ENCODE measurements at regions of chr11 and their contacts with region 1.

Region 1: DNA sequence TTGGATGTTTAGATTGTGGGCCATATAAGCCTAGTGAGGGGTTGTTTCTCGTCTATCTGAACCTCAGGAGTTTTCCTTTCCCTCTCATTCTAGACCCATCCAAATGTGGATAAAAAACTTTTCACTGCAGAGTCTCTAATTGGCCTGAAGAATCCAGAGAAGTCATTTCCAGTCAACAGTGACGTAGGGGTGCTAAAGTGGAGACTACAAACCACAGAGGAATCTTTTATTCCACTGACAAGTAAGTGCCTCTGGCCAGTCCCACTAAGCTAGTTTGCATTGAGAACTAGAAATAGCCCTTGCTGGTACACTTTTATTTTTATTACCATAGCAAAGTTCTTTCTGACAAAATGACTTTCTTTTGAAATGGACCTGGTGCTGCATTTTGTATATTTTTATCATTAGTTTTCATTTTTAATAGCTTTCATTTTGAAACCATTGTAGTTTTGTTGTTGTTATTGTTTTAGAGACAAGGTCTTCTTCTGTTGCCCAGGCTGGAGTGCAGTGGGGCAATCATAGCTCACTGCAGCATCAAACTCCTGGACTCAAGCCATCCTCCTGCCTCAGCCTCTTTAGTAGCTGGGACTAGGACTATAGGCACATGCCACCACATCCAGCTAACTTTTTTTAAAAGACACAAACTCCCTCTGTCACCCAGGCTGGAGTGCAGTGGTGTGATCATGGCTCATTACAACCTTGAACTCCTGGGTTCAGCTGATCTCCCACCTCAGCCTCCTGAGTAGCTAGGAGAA is 14.6 kb upstream of the PHLDB1 start:
- DNase-seq: no peak
- H3K4me3 ChIP-seq: no peak overlapping the region
- H3K27ac ChIP-seq: no peak overlapping the region
- H3K4me1 ChIP-seq: no peaks in the 10 kb centered on the region
- H3K27me3 ChIP-seq: no peaks in the 10 kb centered on the region
- CTCF ChIP-seq: no peak
- POLR2A ChIP-seq: no peak

Region 2: GRCh38 chr11:118565051-118565450 is 27.7 kb before region 1 on chr11:
- CTCF ChIA-PET with region 1: no interaction called
- POLR2A ChIA-PET with region 1: no interaction called
- dilution Hi-C with region 1: no loop called
- intact Hi-C with region 1: no loop called
- DNase-seq: no peak
- H3K4me3 ChIP-seq: no peak overlapping the region
- H3K27ac ChIP-seq: no peak overlapping the region
- H3K4me1 ChIP-seq: peaks cover 5% of the 10 kb centered on the region
- H3K27me3 ChIP-seq: no peaks in the 10 kb centered on the region
- CTCF ChIP-seq: no peak
- POLR2A ChIP-seq: no peak

Region 3: DNA sequence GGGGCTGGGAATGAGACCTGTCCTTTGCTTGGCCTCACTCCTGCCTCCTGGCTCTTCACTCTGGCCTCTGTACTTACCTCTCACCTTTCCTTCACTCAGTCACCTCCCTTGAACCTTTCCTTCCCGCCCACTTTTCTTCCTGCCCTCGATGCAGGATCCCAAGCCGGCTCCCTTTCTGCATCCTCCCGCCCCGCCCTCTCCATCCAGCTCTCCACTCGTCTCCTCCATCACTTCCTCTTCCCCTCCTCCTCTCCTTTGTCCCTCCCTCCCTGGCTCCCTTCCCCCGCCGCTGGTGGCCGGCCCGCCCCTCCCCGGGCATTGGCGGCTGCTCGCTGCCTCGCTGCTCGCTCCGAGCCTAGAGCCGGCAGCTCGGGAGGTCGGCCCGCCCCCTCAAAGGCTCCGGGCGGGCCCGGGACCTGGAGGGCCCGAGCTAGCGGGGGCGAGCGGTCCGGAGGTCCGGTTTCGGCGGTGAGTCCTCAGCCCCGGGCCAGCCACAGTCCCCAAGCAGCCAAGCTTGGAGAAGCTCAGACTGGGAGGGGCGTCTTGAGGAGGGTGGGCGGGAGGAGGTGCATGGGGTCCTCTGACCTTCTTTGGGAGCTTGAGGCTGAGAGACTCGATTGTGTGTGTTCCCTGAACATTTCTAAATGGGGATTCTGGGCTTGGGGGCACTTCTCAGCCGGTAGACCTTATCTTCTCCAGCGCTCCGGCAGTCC is 28.4 kb after region 1 on chr11:
- CTCF ChIA-PET with region 1: interaction called, 14 read pairs
- POLR2A ChIA-PET with region 1: interaction called, 3 read pairs
- dilution Hi-C with region 1: no loop called
- intact Hi-C with region 1: no loop called
- DNase-seq: peak; percentile 93
- H3K4me3 ChIP-seq: peak overlapping the region; percentile 59 to 74 (median 70)
- H3K27ac ChIP-seq: peak overlapping the region; percentile 96
- H3K4me1 ChIP-seq: peaks cover 63% of the 10 kb centered on the region
- H3K27me3 ChIP-seq: no peaks in the 10 kb centered on the region
- CTCF ChIP-seq: no peak
- POLR2A ChIP-seq: peak; percentile 61

Region 4: GRCh38 chr11:118634431-118635236 is 41.8 kb after region 1 on chr11:
- CTCF ChIA-PET with region 1: interaction called, 23 read pairs
- POLR2A ChIA-PET with region 1: no interaction called
- dilution Hi-C with region 1: no loop called
- intact Hi-C with region 1: no loop called
- DNase-seq: no peak
- H3K4me3 ChIP-seq: no peak overlapping the region
- H3K27ac ChIP-seq: no peak overlapping the region
- H3K4me1 ChIP-seq: no peaks in the 10 kb centered on the region
- H3K27me3 ChIP-seq: no peaks in the 10 kb centered on the region
- CTCF ChIP-seq: no peak
- POLR2A ChIP-seq: no peak

Region 5: DNA sequence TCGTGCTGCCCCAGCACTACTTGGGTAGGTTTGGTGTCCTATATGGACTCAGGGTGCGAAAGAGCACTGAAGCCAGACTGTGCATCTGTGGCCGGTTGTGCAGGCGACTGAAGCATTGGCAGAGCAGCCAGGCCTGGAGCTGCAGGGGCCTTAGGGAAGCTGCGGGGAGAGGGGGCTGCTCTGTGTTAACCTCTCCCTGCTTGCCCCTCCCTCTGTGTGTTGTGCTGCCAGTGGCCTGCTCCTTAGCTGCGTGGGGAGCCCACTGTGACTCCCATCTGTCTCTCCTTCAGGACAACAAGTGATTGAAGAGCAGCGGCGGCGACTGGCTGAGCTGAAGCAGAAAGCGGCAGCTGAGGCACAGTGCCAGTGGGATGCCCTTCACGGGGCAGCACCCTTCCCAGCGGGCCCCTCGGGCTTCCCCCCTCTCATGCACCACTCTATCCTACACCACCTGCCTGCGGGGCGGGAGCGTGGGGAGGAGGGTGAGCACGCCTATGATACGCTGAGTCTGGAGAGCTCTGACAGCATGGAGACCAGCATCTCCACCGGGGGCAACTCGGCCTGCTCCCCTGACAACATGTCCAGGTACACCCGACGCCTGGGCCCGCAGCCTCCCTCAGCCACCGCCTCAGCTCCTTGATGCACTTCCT is 52.4 kb after region 1 on chr11:
- CTCF ChIA-PET with region 1: interaction called, 11 read pairs
- POLR2A ChIA-PET with region 1: no interaction called
- dilution Hi-C with region 1: no loop called
- intact Hi-C with region 1: no loop called
- DNase-seq: no peak
- H3K4me3 ChIP-seq: no peak overlapping the region
- H3K27ac ChIP-seq: no peak overlapping the region
- H3K4me1 ChIP-seq: no peaks in the 10 kb centered on the region
- H3K27me3 ChIP-seq: no peaks in the 10 kb centered on the region
- CTCF ChIP-seq: no peak
- POLR2A ChIP-seq: no peak

Region 6: DNA sequence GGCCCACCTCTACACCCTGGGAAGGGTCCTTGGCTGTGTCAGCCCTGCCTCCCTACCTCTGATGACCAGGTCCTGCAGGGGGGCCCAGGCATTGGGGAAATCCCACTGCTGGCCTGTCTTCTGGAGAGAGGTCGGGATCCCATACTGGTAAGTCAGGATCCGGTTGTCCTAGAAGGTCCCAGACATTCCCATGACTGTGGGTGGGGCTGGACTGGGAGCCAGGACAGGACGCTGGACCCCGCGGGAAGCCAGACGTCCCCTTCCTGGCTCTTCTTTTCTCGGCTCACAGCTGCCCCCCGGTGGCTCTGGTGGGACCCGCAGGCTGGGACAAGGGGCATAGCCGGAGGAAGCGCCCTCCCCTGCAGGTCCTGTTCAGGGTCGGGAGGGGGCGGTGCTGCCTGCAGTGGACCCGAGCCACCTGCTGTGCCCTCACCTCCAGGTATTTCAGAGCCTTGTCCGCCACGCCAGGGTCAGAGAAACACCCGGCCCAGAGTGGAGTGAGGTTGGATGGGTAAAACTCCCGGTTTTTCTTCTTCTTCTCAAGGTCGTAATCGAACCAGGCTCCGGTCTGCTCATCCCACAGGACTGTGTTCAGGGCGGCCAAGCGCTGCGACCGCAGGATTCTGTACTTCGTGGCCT is 66.6 kb after region 1 on chr11:
- CTCF ChIA-PET with region 1: interaction called, 65 read pairs
- POLR2A ChIA-PET with region 1: no interaction called
- dilution Hi-C with region 1: no loop called
- intact Hi-C with region 1: loop called (anchors 1 kb)
- DNase-seq: peak; percentile 86
- H3K4me3 ChIP-seq: no peak overlapping the region
- H3K27ac ChIP-seq: peak overlapping the region; percentile 18
- H3K4me1 ChIP-seq: peaks cover 6% of the 10 kb centered on the region
- H3K27me3 ChIP-seq: peaks cover 0 to 2% of the 10 kb centered on the region in 2 experiments
- CTCF ChIP-seq: peak; percentile 97 to 98
- POLR2A ChIP-seq: peak; percentile 65